Activated T-helper 1 cell treated with anti-CD3 and anti-CD28 coated beads, Interleukin-12 subunit alpha, Interleukin-12 subunit beta, Interleukin-2, Interleukin-4 antibody, amounts not matched to agents 30 ng/mL and 10 ng/mL and 1 ng/mL, durations not matched to agents 14 hours and 24 hours and 36 hours (primary cell): ENCODE measurements at regions of chr9 and their contacts with region 1.

Region 1: DNA sequence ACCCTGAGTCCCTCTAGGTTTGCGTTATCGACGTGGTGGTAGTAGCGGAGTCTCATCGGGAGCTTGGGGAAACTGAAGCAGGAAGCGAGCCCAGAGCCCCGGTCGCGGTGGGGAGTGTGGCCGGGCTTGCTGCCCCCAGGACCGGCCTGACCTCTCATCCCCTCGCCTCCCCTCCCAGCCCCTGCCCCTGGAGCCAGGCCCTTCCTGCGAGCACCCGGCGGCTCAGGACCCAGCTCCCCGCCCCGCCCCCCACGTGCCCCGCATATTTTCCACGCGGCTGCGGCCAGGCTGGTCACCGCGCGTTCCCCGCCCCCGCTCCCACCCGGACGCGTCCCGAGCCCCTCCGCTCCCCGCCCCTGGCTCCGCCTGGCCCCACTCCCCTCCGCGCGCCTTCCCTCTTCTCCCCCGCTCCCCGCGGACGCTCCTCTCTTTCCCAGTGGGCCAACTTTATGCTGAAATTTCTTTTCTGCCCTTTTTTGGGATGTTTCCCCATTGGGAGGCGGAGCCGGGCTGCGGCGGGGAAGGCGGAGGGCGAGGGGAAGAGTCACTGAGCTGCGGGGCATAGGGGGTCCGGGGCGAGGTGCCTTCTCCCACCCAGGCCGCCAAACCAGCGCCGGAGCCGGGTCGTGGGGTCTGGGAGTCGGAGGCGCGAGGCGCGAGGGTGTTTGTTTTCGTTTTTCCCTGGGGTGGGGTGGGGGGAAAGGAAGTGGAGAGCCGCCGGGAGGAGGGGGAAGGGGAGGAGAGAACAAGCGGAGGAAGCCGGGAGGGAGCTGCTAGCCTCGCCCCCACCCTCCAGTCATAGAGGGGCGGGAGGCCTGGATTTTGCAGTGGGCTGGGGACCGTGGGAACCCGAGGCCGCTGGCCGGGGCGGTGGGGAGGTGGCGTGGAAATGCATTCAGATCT is 957 bp upstream of the TPM2 start:
- DNase-seq: peak; percentile 9
- H3K4me3 Mint-ChIP-seq: peak overlapping the region; percentile 84
- H3K27ac Mint-ChIP-seq: peak overlapping the region; percentile 55
- H3K4me1 Mint-ChIP-seq: peaks cover 26% of the 10 kb centered on the region
- H3K27me3 Mint-ChIP-seq: peaks cover 2% of the 10 kb centered on the region

Region 2: GRCh38 chr9:35657546-35658136 is 33.0 kb before region 1 on chr9 and contains the start of gene RMRP:
- intact Hi-C with region 1: loop called (anchors 2 kb)
- DNase-seq: peak; percentile 88
- H3K4me3 Mint-ChIP-seq: peak within 1 kb of the TSS; percentile 84
- H3K27ac Mint-ChIP-seq: peak within 1 kb of the TSS; percentile 99
- H3K4me1 Mint-ChIP-seq: peaks cover 59% of the 10 kb centered on the region
- H3K27me3 Mint-ChIP-seq: peaks cover 2% of the 10 kb centered on the region
- total RNA-seq, gene RMRP: 5,317 and 5,787 TPM in 2 replicates

Region 3: GRCh38 chr9:35664531-35665470 is 25.9 kb before region 1 on chr9 and contains the start of gene ARHGEF39:
- intact Hi-C with region 1: loop called (anchors 1 kb)
- DNase-seq: peak; percentile 76
- H3K4me3 Mint-ChIP-seq: peak within 1 kb of the TSS; percentile 88
- H3K27ac Mint-ChIP-seq: peak within 1 kb of the TSS; percentile 79
- H3K4me1 Mint-ChIP-seq: peaks cover 53% of the 10 kb centered on the region
- H3K27me3 Mint-ChIP-seq: no peaks in the 10 kb centered on the region
- total RNA-seq, gene ARHGEF39: 7.9 and 8.8 TPM in 2 replicates